WTC11 (cell line): ENCODE measurements at regions of chr19 and their contacts with region 1.

Region 1: DNA sequence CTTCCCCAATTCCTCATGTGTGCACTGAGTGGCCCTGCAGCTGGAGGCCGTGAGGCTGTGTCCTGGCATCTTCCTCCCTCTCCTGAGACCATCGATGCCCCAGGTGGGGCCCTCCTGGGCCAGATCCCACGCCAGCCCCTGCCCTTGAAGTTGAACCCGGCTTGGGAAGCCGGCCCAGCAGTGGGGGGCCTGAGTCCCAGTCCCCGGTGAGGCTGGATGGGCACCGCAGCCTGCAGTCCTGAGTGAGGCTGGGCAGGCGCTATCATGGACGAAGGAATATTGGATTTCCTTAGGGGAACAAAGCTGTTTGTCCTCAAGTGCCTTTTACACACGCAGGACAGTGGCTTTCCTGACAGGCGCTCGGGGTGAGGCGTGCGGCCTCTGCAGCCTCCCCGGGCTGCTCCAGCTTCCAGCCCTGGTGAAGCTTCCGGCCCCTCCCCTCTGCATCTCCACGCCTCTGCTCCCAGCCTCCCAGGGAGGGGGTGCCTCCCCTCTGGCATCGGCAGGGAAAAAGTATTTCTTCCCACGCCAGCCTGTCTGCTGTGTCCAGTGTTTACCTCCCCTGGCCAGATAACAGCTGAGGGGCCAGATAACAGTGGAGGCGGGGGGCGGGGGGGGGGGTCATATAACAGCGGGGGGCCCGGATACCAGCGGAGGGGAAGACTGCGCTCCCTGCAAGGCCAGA is 159.5 kb downstream of the KDM4B start:
- DNase-seq: no peak
- ATAC-seq: peak; percentile 9; the same call in 1 of the 2 replicates
- H3K4me3 Mint-ChIP-seq: no peak overlapping the region
- H3K27ac Mint-ChIP-seq: no peak overlapping the region
- H3K4me1 Mint-ChIP-seq: peaks cover 48% of the 10 kb centered on the region
- H3K27me3 Mint-ChIP-seq: no peaks in the 10 kb centered on the region
- CTCF ChIP-seq: no peak

Region 2: DNA sequence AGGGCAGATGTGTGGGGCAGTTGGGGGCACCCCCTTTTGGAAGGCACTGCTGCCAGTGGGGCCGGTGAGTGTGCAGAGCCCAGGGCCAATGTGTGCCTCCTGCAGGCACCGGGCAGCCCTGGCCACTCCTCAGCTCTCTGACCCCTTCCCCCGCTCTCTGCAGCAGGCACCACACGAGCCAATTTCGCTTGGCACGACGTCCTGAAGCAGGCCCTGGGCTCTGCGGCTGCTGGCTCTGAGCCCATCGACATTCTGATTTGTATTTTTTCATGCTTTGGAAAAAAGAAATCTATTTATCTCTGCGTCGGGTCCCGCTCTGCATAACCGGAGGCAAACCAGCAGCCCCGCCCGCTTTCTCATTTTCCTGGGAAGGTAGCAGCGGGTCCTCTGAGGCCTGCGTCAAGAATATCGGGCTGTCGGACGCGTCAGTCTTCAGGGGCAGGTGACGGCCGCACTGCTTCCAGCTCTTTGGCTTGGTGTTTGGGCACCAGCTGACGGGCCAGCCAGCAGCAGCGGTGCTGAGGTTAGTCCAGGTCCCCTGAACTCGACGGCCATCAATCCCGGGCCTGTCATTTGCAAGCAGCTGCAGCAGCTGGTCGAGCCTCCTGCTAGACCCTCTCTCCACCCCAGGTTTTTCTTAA is 25.2 kb before region 1 on chr19:
- CTCF ChIA-PET with region 1: interaction called, 20 read pairs
- POLR2A ChIA-PET with region 1: no interaction called
- DNase-seq: no peak
- ATAC-seq: no peak
- H3K4me3 Mint-ChIP-seq: no peak overlapping the region
- H3K27ac Mint-ChIP-seq: no peak overlapping the region
- H3K4me1 Mint-ChIP-seq: no peaks in the 10 kb centered on the region
- H3K27me3 Mint-ChIP-seq: no peaks in the 10 kb centered on the region
- CTCF ChIP-seq: no peak

Region 3: GRCh38 chr19:5112681-5113557 is 15.5 kb before region 1 on chr19:
- CTCF ChIA-PET with region 1: interaction called, 20 read pairs
- POLR2A ChIA-PET with region 1: no interaction called
- DNase-seq: no peak
- ATAC-seq: no peak
- H3K4me3 Mint-ChIP-seq: no peak overlapping the region
- H3K27ac Mint-ChIP-seq: peak overlapping the region; percentile 83
- H3K4me1 Mint-ChIP-seq: peaks cover 30% of the 10 kb centered on the region
- H3K27me3 Mint-ChIP-seq: no peaks in the 10 kb centered on the region
- CTCF ChIP-seq: no peak